Lower lobe of right lung (tissue), 2 donors: ENCODE measurements at regions of chr4 and their contacts with region 1.

Region 1: DNA sequence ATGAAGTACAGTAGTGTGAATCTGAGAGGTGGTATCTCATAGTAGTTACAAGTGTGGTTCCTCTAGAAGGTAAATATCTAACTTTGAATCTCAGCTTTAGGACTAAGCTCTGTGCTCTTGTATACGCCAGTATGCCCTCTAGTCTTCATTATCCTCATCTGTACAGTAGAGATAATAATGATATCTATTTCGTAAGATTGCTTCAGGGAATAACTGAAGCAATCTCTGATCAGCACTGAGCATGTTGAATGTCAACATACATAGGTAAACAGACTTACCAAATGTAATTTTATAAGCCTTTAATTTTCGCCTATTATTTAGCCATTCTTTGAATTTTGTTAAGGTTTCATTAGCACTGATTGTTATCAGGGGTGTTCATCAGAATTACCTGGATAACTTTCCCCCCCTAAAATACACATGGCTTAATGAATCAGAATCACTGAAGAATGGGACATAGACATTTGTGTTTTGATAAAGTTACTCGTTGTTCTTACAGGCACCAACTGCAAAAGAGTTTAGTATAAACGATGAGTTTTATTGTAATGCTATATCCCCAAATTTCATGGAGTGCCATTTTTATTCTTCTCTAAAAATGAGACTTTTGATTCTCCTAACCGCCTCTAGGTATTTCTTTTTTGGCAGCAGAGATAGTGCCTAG is 175.3 kb upstream of the ANKRD50 start:
- DNase-seq: no peak
- ATAC-seq: no peak
- H3K4me3 ChIP-seq: no peak overlapping the region
- H3K27ac ChIP-seq: no peak overlapping the region
- H3K4me1 ChIP-seq: no peaks in the 10 kb centered on the region
- H3K27me3 ChIP-seq: no peaks in the 10 kb centered on the region
- CTCF ChIP-seq: no peak

Region 2: DNA sequence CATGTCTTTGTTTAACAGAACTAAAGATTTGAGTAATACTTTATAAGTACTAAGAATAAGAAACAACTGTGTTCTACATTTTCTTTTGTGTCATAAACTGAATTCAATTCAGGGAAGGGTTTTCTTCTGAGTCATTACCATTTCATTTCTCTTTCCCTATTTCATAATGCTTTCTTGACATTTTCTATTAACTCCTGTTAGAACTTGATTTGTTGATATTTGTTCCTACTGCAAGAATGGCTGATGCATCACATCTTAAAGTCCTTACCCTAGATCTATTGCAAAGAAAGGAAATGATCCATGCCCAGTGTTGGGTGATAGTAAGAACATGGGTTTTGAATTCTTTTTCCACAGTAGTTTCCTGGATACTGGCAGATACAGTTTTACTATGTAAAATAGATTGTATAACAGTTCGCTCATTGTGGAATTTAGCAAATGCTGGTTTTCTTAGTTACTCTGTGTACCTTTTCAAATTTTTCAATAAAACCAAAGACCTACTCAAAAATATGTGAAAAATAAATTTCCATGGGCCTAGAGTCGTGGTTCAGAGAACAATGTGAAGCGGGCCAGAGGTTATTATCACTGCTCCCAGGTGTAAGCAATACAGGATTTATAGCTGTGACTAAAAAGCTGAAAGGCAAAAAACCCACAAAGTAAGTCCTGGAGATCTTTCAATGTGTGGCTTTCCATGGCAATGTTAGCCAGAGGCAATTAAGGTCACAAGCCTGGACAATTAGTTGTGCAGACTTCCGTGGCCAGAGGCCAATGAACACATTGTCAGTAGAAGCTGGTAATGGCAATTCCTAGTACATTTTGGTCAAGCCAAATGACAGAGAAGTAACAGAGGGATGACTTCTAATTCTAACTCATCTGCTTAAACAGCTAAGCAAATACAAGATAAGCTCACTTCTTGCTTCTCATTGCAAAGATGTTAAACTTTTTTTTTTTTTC is 299.6 kb after region 1 on chr4:
- intact Hi-C with region 1: loop called (anchors 5 kb)
- DNase-seq: no peak
- ATAC-seq: no peak
- H3K4me3 ChIP-seq: no peak overlapping the region
- H3K27ac ChIP-seq: no peak overlapping the region
- H3K4me1 ChIP-seq: no peaks in the 10 kb centered on the region
- H3K27me3 ChIP-seq: no peaks in the 10 kb centered on the region
- CTCF ChIP-seq: no peak